HEK293 (cell line): ENCODE measurements at regions of chr4 and their contacts with region 1.

Region 1: DNA sequence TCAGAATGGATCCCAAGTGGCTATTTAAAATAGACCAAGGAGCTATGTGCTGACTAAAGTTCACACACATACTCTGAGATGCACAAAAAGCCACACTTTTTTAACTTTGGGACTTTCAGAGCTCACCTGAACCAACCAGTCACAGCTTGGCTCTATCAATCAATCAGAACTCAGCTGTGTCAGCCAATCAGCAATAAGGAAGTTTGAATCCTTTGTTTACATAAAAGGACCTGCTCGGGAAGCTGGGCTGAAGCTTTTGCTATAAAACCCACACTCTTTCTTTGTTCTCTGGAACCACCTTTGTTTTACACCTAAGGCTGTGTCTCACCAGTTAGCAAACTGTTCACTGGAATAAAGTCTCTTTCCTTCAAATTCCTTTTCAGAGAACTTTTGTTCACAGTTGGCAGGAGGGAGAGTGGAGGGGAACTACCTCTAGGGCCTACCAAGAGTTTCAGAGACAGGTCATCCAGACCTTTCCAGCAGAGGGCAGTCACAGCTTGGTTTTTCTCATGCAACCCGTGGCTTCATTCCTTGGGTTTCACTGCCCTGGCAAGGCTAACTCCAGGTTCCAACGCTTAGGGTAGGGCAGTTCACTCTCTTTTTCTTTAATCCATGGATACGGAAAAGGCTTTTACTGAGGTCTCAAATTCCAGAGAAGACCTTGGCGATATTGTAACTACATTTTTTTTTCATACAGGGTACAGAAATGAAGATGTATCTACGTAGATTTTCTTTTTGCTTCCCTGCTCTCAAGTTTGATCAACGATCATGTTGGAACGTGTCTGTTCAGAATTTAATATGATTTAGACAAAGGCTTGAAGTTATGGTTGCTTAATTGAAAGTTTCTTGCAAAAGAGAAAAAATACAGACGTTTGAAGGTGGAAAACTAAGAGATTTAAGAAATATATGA is 80.7 kb downstream of the GPRIN3 start:
- H3K4me3 ChIP-seq: no peak overlapping the region
- H3K27ac ChIP-seq: no peak overlapping the region
- H3K4me1 ChIP-seq: no peaks in the 10 kb centered on the region
- CTCF ChIP-seq: peak; percentile 63

Region 2: DNA sequence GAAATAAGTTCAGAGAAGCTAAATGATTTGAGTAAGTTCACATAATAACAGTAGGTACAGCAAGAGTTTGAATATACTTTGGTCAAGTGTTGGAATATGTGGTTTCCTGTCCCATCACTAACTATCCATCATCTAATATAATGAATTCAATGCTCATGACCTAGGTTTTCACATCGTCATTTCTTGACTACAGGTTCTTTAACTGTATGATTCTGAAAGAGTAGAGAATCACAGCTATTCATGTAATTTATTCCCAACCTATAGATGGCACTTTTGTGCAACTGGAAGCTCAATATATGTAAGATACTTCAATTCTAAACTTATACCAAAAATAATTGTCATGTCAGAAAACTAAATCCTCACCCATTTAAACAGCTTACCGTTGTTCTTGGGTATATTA is 62.5 kb before region 1 on chr4:
- CTCF ChIA-PET with region 1: interaction called, 11 read pairs
- POLR2A ChIA-PET with region 1: no interaction called
- H3K4me3 ChIP-seq: no peak overlapping the region
- H3K27ac ChIP-seq: no peak overlapping the region
- H3K4me1 ChIP-seq: no peaks in the 10 kb centered on the region
- CTCF ChIP-seq: no peak

Region 3: DNA sequence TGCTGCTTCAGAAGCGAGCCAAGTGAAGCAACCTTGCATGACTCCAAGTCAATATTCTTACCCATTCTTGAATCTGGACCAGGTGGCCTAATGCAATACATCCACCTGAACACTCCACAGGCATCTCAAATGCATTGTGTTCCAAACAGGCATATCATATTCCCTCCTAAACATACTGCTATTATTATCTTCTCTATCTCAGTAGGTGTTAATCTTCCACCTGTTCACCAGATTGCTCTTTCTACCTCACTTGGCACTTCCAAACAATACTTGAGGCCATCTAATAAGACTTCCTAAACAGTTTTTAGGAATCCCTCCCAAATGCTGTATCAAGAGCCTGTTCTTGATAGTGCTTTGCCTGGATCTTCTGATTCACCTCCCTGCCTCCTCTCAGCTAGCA is 10.1 kb before region 1 on chr4:
- CTCF ChIA-PET with region 1: interaction called, 12 read pairs
- POLR2A ChIA-PET with region 1: no interaction called
- H3K4me3 ChIP-seq: no peak overlapping the region
- H3K27ac ChIP-seq: no peak overlapping the region
- H3K4me1 ChIP-seq: no peaks in the 10 kb centered on the region
- CTCF ChIP-seq: no peak

Region 4: GRCh38 chr4:89268679-89269078 is 41.8 kb after region 1 on chr4:
- CTCF ChIA-PET with region 1: no interaction called
- POLR2A ChIA-PET with region 1: no interaction called
- H3K4me3 ChIP-seq: no peak overlapping the region
- H3K27ac ChIP-seq: no peak overlapping the region
- H3K4me1 ChIP-seq: no peaks in the 10 kb centered on the region
- CTCF ChIP-seq: no peak

Region 5: DNA sequence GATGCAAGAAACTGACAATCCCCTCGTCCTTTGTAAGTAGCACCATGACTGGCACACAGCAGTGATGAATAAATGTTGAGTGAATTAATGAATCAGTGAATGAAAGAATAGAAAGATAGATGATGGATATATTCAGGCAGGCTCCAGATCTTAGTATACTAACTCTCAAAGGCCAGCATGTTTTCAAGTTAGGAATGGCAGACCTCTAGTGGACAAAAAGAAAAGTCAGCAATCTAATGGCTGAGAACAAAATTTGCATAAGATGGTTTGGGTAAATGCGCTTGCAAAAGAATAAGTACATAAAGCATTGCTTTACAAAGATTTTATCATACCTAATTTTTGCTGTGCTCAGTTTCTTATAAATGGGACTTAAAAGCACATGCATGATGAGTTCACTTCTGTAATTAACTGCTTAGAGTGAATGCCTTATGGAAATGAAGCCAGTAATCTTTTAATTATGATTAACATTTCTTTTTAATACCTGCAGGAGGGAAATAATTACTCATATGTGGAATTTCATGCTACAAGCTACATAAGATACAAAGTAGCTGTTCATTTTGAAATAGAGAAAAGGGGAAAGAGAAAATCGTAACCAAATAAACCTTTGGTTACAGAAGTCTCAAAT is 207.6 kb after region 1 on chr4:
- CTCF ChIA-PET with region 1: interaction called, 18 read pairs
- POLR2A ChIA-PET with region 1: no interaction called
- H3K4me3 ChIP-seq: no peak overlapping the region
- H3K27ac ChIP-seq: no peak overlapping the region
- H3K4me1 ChIP-seq: no peaks in the 10 kb centered on the region
- CTCF ChIP-seq: peak; percentile 36; the same call in 1 of the 2 replicates